CD4-positive, alpha-beta memory T cell (primary cell): ENCODE measurements at regions of chr2 and their contacts with region 1.

Region 1: GRCh38 chr2:178496049-178496448 is 15.8 kb downstream of the PLEKHA3 start:
- DNase-seq: no peak
- H3K4me3 ChIP-seq: no peak overlapping the region
- H3K4me3 Mint-ChIP-seq: no peak overlapping the region
- H3K27ac ChIP-seq: no peak overlapping the region
- H3K27ac Mint-ChIP-seq: no peak overlapping the region
- H3K4me1 ChIP-seq: no peaks in the 10 kb centered on the region
- H3K4me1 Mint-ChIP-seq: peaks cover 0 to 3% (median under 1%) of the 10 kb centered on the region in 4 donors
- H3K27me3 ChIP-seq: no peaks in the 10 kb centered on the region
- H3K27me3 Mint-ChIP-seq: no peaks in the 10 kb centered on the region

Region 2: DNA sequence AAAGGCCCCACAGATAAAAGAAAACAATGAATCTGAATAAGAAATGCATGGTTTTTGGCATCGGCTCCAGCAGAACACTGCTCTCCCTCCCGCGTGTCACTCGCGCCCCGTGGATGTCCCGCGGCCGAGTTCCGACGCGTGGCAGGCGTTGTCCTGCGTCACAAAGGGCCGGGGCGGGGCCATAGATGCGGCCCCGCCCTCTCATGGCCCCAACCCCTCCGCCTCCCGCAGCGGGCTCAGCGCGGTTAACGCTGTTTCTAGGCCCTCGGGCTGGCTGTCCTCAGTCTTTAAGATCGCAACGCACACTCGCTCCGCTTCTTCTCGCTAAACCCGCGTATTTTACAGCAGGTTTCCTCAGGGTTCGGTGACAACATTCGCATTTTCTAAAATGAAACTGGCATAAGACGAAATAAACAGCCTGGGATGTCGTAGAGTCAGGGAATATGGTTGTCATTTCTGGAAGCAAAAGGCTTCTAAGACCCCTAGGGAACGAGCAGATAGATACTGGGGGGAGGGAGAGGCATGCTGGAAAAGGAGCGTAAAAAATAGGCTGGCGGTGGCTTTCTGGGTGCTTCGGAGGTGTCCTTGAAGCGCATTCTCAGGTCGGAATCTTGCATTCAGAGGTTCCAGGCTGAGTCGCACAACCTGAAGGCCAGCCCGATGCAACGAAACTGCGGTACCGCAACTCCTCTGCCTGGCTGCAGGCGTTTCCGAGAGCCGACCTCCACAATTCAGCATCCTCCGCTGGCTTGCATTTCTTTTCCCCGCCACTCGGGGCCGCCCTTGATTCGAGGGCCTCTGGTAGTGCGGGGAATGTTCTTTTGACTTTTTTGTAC is 17.4 kb before region 1 on chr2 and contains the start of gene FKBP7:
- CTCF ChIA-PET with region 1: interaction called, 5 read pairs
- POLR2A ChIA-PET with region 1: interaction called, 8 read pairs
- intact Hi-C with region 1: loop called (anchors 2 kb)
- DNase-seq: peak; percentile 80 to 88 (median 83)
- H3K4me3 ChIP-seq: peak within 1 kb of the TSS; percentile 96 to 100
- H3K4me3 Mint-ChIP-seq: peak within 1 kb of the TSS; percentile 96 to 100 (median 99)
- H3K27ac ChIP-seq: peak within 1 kb of the TSS; percentile 81
- H3K27ac Mint-ChIP-seq: peak within 1 kb of the TSS; percentile 96 to 100 (median 99)
- H3K4me1 ChIP-seq: peaks cover 41% of the 10 kb centered on the region
- H3K4me1 Mint-ChIP-seq: peaks cover 33 to 50% (median 39%) of the 10 kb centered on the region in 4 donors
- H3K27me3 ChIP-seq: no peaks in the 10 kb centered on the region
- H3K27me3 Mint-ChIP-seq: no peaks in the 10 kb centered on the region
- total RNA-seq, gene FKBP7: 0.79 to 0.80 TPM